ENCODE measurements at regions of chr9 and their contacts with region 1.

Region 1: DNA sequence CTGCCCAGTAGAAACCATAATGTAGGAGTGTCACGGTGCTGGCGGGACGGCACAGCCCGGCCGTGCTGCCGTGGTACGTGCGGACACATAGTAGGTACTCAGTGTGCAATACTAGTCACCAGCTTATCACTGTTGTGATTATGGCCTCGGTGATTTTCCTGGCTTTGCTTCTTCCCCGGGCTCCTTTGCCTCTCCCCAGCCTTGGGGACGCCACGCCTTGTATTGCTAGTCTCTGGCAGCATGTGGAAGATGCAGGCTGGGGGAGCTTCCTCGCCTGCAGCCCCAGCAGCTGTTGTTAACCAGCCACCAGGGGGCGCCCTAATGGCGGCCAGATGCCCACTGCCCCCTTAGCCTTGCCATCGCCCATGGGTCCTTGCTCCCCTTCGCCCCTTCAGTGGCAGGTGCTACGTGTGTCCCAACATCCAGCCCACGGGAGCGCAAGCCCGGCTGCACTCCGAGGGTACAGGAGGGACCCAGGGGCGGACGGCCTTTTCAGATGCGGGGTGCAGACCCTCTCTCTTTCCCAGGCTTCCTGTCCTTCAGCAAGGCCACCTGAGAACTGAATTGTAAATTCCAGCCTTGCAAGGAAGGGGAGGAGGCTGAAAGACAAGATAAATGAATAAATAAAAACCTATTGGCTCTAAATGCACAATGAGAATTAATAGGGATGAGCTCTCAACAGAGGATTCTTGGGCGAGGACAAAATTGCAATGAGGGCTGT is 8.0 kb downstream of the NTNG2 start:
- DNase-seq: peak; percentile 41
- ATAC-seq: peak; percentile 62
- H3K4me3 ChIP-seq: no peak overlapping the region
- H3K27ac ChIP-seq: no peak overlapping the region
- H3K4me1 ChIP-seq: no peaks in the 10 kb centered on the region
- H3K27me3 ChIP-seq: peaks cover 16% of the 10 kb centered on the region
- CTCF ChIP-seq: peak; percentile 83

Region 2: GRCh38 chr9:131755541-131756198 is 414.2 kb before region 1 on chr9:
- CTCF ChIA-PET with region 1: no interaction called
- POLR2A ChIA-PET with region 1: no interaction called
- intact Hi-C with region 1: loop called (anchors 5 kb)
- DNase-seq: peak; percentile 77
- ATAC-seq: peak; percentile 96
- H3K4me3 ChIP-seq: no peak overlapping the region
- H3K27ac ChIP-seq: no peak overlapping the region
- H3K4me1 ChIP-seq: 0 out of 2 replicates have a peak, but pooled peaks cover 3% of the 10 kb centered on the region
- H3K27me3 ChIP-seq: peaks cover 16% of the 10 kb centered on the region
- CTCF ChIP-seq: peak; percentile 80

Region 3: DNA sequence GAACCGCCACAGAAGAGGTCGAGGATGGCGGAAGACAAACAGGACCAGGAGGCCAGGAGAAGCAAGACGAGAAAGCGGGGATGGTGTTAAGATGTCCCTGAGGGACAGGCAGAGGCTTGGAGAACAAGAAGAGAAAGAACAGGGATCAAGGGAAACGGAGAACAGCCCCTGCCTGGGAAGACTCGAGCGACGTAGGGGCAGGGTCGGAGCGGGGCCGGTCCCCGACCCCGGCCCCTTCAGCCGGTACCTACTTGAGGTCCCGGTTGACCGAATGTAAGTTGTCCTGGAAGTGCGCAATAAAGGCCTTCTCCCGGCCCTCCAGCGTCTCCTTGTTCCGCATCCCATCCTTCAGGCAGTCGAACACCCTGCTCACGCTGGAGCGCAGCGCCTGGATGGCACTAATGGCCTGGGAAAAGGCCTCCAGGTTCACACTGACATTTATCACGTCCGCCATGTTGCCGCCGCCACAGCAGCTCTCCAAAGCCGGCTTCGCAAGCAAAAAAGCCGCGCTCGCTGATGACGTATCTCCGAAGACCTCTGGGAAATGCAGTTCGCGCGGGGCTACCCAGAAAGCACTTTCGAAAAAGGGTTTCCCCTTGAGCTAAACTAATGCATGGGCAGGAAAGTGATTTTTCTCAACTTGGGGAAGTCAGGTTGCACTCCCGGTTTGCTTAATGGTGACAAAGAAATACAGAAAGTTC is 90.3 kb before region 1 on chr9 and contains the start of gene MED27:
- CTCF ChIA-PET with region 1: no interaction called
- POLR2A ChIA-PET with region 1: no interaction called
- intact Hi-C with region 1: loop called (anchors 10 kb)
- DNase-seq: peak; percentile 90
- ATAC-seq: peak; percentile 85
- H3K4me3 ChIP-seq: peak within 1 kb of the TSS; percentile 98
- H3K27ac ChIP-seq: peak within 1 kb of the TSS; percentile 39
- H3K4me1 ChIP-seq: peaks cover 26% of the 10 kb centered on the region
- H3K27me3 ChIP-seq: no peaks in the 10 kb centered on the region
- CTCF ChIP-seq: no peak
- total RNA-seq, gene MED27: 22.7 and 38.4 TPM in 2 replicates

Measured in PC-3 (cell line).